ENCODE measurements at regions of chrX and their contacts with region 1.

Region 1: DNA sequence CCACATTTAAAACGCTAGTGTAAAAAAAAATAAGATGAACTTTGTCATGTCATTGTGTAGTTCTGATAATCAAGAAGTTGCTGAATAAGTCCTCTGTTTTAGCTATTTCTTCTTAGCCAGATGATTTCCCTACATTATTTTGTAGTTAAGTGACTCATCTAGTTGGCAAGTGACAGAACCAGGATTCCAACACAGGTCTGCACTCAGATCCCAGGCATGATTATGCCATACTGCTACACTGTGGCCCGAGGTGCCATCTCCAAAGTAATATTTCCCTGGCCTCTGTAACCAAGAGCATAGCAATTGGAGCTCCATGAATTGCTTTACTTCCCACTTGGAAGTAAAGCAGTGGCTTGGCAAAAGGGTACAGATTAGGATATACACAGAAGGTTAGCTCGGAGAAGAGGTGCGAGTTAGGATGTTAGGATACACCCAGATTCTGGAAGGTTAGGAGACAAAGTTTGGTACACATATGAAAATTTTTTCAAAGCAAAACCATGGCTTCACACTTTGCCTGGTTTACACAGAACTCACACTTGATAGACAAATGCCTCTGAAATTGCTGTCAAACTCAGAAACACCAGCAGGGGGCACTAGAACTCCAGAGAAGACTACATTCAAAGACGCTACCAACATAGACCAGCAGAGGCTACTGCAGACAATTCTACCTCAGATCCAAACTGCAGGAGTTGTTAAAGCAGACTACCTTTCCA is 41.4 kb downstream of the SRPX2 start:
- DNase-seq: peak in 7 of 10 donors; percentile 22 to 85 (median 58)

Region 2: DNA sequence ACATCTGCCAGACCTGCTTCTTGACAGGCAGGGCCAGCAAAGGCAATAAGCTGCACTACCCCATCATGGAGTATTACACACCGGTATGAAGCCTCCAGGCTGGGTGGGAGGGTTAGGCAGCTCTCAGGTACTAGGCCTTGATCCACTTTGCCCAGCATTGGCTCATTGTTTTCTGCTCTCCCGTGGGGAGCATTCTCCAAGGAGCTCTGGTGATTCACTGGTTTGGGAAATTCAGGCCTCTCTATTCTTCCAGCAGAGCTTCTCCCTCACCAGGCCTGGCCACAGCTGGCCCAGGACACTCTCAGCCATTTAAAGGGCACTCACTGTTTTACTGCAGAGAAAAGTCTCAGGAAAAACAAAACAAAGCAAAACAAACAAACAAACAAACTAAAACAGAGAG is 567.2 kb after region 1 on chrX:
- intact Hi-C with region 1: no loop called
- DNase-seq: no peak

Region 3: GRCh38 chrX:101287402-101287801 is 602.0 kb after region 1 on chrX:
- intact Hi-C with region 1: loop called (anchors 5 kb)
- DNase-seq: no peak